Dorsolateral prefrontal cortex (tissue), 120 donors: ENCODE measurements at regions of chr3 and their contacts with region 1.

Region 1: GRCh38 chr3:136250226-136250902 is at the start of gene PCCB:
- DNase-seq: peak; percentile 84 to 94 (median 90)
- H3K4me3 ChIP-seq: peak within 1 kb of the TSS; percentile 42 to 93 (median 81)
- H3K27ac ChIP-seq: peak within 1 kb of the TSS; percentile 72 to 99 (median 95)
- H3K27me3 ChIP-seq: no peaks in the 10 kb centered on the region
- CTCF ChIP-seq: peak; percentile 58 to 94 (median 82)
- total RNA-seq, gene PCCB: 37.3 to 110 (median 59.5) TPM

Region 2: GRCh38 chr3:136532766-136533165 is 282.4 kb after region 1 on chr3:
- intact Hi-C with region 1: no loop called
- DNase-seq: no peak
- H3K4me3 ChIP-seq: no peak overlapping the region
- H3K27ac ChIP-seq: no peak overlapping the region
- H3K27me3 ChIP-seq: no peaks in the 10 kb centered on the region
- CTCF ChIP-seq: no peak

Region 3: DNA sequence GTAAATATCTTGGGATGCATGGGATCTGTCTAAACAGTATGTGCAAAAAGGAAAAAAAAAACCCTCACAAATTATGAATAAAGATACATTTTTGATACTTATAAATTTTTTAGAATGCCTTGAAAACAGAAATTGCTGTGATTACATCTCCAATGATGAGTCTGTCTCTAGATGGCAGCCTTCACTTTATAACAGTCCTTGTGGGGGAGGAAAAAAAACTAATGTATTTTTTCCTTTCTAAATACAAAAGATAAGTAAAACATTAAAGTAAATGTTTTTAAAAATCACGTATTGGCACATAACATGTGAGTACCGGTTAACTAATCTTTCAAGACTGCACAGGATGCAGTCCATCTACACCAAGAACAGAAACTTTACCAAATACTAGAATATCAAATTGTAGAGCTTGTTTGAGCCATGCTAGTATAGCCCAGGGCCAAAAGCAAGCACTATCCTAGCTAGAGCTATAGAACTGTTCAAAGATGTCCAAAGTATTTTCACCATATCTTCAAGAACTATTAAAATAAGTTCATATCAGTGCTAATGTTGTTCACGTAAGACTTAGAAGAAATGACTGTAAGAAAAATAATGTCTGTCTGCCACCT is 295.4 kb after region 1 on chr3:
- intact Hi-C with region 1: loop called in 1 of 2 experiments (anchors 10 kb)
- DNase-seq: no peak
- H3K4me3 ChIP-seq: peak overlapping the region in 1 of 59 donors; percentile 25
- H3K27ac ChIP-seq: peak overlapping the region in 47 of 59 donors; percentile 1 to 77 (median 55)
- H3K27me3 ChIP-seq: no peaks in the 10 kb centered on the region
- CTCF ChIP-seq: peak in 55 of 56 donors; percentile 6 to 87 (median 59)